GM12878 (cell line): ENCODE measurements at regions of chr12 and their contacts with region 1.

Region 1: DNA sequence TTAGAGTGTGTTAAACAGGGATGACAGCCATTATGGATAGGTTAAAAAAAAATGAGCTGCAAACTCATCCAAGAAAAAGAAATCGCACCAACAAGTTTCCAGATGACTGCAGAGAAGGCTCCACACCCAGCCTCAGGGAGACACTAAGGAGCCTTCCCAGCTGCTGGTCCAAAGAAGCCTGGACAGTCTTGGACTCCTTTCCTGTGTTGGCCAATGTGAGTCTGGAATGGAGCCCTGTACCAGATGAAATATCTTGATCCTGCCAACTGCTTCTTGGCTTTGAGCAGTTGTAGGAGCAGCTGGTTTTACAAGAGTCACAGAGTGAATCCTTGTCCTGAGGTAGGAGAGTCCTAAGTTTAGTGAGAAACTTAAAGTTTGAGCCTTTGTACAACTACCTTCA is 44.5 kb downstream of the SLC38A1 start:
- DNase-seq: no peak
- ATAC-seq: no peak
- H3K4me3 ChIP-seq: no peak overlapping the region
- H3K27ac ChIP-seq: no peak overlapping the region
- H3K4me1 ChIP-seq: peaks cover 22% of the 10 kb centered on the region
- H3K27me3 ChIP-seq: no peaks in the 10 kb centered on the region
- CTCF ChIP-seq: no peak
- EP300 ChIP-seq: no peak
- POLR2A ChIP-seq: no peak
- RAD21 ChIP-seq: no peak

Region 2: DNA sequence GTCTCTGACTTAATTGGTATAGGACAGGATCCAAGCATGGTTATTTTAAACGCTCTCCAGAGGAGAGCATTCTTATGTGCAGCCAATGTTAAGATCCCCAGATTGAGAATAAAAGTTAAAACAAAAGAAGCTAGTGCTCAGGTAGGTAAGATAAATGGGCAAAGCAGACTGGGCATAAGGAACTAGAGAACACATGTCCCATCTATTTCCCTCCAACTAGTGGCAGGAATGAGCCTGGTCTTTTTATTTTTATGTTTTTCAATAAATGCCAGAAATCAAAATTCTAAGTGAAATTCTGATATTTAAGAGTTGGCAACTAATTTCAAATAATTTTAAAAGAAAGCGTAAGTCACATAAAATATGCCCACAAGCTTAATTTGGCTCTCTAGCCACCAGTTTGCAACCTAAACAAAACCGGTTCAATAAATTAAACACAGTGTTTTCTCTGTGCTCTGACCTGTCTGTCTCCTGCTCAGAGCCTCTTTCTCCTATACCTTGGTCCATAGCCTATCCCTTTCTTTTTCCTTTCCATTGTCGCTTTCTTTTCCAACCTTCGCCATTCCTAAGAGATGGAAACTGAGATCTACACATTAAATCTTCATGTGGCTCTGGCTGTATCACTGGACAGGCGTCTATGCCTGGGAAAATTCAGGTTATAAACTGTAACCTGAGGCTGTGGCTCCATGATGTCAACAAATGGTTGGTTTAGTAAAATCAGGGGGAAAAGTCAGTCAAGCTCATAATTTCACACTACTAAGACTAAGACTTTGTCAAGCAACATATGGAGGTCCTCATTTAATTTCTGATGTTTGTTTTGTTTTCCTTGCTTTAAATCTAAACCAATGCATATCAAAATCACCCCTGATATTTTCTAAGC is 39.0 kb after region 1 on chr12:
- CTCF ChIA-PET with region 1: interaction called, 14 read pairs
- POLR2A ChIA-PET with region 1: interaction called, 30 read pairs
- RAD21 ChIA-PET with region 1: interaction called, 60 read pairs
- SMC1A ChIA-PET with region 1: interaction called, 95 read pairs
- in situ Hi-C with region 1: no loop called
- intact Hi-C with region 1: no loop called
- DNase-seq: no peak
- ATAC-seq: no peak
- H3K4me3 ChIP-seq: peak overlapping the region; percentile 11
- H3K27ac ChIP-seq: peak overlapping the region; percentile 35
- H3K4me1 ChIP-seq: peaks cover 12% of the 10 kb centered on the region; the same call in 1 of the 2 replicates
- H3K27me3 ChIP-seq: no peaks in the 10 kb centered on the region
- CTCF ChIP-seq: no peak
- EP300 ChIP-seq: no peak
- POLR2A ChIP-seq: no peak
- RAD21 ChIP-seq: no peak